ENCODE measurements at regions of chr9 and their contacts with region 1.

Region 1: DNA sequence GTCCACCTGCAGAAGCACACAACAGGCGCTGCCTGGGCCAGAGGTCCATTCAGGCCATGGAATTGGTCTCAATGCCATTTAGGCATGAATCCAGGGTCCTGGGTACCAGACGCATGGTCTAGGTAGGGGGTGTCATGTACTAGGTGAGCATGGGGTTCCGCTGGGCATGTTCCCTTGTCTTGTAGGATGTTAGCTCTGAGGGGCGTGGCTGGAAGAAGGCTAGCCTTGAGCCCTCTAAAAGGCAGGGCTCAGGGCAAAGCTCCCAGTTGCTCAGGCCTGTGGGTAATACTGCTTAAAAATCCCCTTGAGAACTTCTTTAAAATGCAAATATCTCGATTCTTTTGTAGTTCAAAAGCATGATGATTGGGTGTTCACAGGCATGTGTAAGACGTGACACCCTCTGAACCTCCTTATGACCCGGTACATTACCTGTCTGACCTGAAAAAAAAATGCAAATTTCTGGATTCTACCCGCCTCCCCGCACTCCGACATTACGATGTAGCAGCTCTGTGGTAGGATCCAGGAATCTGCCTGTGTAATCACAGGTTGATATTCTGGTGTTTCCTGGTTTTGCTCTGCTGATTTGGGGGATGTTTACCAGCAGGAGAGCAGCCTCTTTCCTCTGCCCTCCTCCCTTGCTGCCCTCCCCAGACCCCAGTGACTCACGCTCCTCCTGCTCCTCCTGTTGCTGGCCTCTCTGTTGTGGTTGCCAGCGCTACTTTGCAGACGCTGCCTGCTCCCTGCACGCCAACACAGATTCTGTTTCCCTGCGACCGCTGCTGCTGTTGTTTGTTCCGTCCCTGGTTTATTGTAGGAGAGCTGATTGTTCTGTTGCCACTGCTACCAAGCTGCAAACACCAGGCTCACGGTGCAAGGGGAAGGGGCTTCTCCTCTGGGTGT is 5.7 kb downstream of the TMC1 start:
- DNase-seq: peak; percentile 24 to 81 (median 63)
- ATAC-seq: peak; percentile 90
- H3K4me3 ChIP-seq: peak overlapping the region; percentile 28
- H3K4me3 Mint-ChIP-seq: peak overlapping the region; percentile 83 to 94 (median 88)
- H3K27ac ChIP-seq: peak overlapping the region; percentile 65
- H3K27ac Mint-ChIP-seq: peak overlapping the region; percentile 85 to 98 (median 92)
- H3K4me1 ChIP-seq: peaks cover 13 to 15% of the 10 kb centered on the region in 2 donors
- H3K4me1 Mint-ChIP-seq: peaks cover 11 to 56% (median 28%) of the 10 kb centered on the region in 7 donors
- H3K27me3 ChIP-seq: no peaks in the 10 kb centered on the region
- H3K27me3 Mint-ChIP-seq: no peaks in the 10 kb centered on the region

Region 2: DNA sequence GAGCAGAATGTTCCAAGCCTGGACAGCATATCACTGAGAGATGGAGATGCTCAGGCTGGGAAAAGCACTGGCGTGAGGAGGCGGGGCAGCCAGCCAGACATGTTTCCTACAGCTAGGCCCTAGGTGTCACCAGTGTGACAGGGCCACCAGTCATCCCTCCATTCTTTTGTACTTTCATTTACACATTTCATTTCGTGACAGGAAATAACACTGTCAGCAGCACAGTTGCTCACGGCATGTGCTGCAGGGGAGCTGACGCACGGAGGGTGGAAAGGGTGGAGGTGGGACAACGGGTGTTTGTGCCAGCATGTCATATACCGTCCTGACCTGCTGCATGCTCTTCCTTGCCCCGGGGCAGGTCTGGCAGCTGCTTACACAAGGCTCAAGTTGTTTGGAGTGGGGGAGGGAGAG is 744.0 kb before region 1 on chr9:
- CTCF ChIA-PET with region 1: no interaction called
- POLR2A ChIA-PET with region 1: no interaction called
- intact Hi-C with region 1: loop called (anchors 2 to 5 kb)
- DNase-seq: peak; percentile 60 to 93 (median 90)
- ATAC-seq: peak; percentile 98
- H3K4me3 ChIP-seq: peak overlapping the region; percentile 18
- H3K4me3 Mint-ChIP-seq: peak overlapping the region; percentile 62 to 82 (median 76)
- H3K27ac ChIP-seq: peak overlapping the region; percentile 85
- H3K27ac Mint-ChIP-seq: peak overlapping the region; percentile 94 to 100 (median 99)
- H3K4me1 ChIP-seq: peaks cover 38% of the 10 kb centered on the region in 2 donors
- H3K4me1 Mint-ChIP-seq: peaks cover 20 to 58% (median 53%) of the 10 kb centered on the region in 7 donors
- H3K27me3 ChIP-seq: no peaks in the 10 kb centered on the region
- H3K27me3 Mint-ChIP-seq: no peaks in the 10 kb centered on the region

Region 3: DNA sequence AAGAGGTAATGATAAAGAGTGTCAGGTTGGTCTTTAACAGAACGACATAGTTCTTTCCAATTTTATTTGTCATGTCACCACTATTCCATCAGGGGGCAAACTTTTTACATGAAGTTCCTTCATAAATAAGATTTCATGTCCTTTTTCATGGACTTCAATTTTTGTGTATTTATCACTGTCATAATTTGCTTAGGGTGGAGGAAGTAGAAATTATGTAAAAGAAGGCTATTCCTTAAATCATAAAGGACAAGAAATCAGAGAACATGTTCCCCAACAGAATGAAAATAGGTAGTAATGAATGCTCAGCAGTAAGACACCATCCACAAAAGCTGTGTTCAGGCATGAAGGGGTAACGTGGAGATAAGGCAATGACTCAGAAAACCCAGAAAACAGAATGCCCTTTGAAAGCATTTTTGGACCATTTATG is 234.9 kb before region 1 on chr9:
- CTCF ChIA-PET with region 1: no interaction called
- POLR2A ChIA-PET with region 1: interaction called, 3 read pairs
- intact Hi-C with region 1: loop called in 1 of 2 experiments (anchors 1 kb)
- DNase-seq: peak in 5 of 9 donors; percentile 12 to 35 (median 27)
- ATAC-seq: peak; percentile 60
- H3K4me3 ChIP-seq: no peak overlapping the region
- H3K4me3 Mint-ChIP-seq: no peak overlapping the region
- H3K27ac ChIP-seq: no peak overlapping the region
- H3K27ac Mint-ChIP-seq: no peak overlapping the region
- H3K4me1 ChIP-seq: no peaks in the 10 kb centered on the region
- H3K4me1 Mint-ChIP-seq: peaks cover 0 to 7% (median 0%) of the 10 kb centered on the region in 7 donors
- H3K27me3 ChIP-seq: no peaks in the 10 kb centered on the region
- H3K27me3 Mint-ChIP-seq: peaks cover 0 to 21% (median 6%) of the 10 kb centered on the region in 5 donors

Region 4: DNA sequence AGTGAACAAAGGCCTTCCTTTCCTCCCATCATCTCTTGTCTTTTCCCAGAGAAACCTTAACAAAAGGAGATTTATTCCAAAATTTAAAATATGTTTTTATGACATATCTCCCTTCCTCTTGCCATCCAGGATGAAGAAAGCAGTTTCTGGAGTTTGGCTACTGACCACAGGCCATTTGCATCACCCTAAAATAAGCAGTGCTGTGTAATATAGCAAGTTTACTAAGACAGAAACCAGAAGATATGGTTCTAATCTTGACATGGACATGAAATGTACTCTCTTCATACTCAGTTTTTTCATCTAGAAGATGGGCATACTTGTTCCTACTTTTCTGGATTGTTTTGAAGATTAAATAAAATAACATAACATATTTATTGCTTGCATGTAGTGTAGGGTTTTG is 112.0 kb before region 1 on chr9:
- CTCF ChIA-PET with region 1: no interaction called
- POLR2A ChIA-PET with region 1: no interaction called
- intact Hi-C with region 1: no loop called
- DNase-seq: no peak
- ATAC-seq: no peak
- H3K4me3 ChIP-seq: no peak overlapping the region
- H3K4me3 Mint-ChIP-seq: no peak overlapping the region
- H3K27ac ChIP-seq: no peak overlapping the region
- H3K27ac Mint-ChIP-seq: no peak overlapping the region
- H3K4me1 ChIP-seq: no peaks in the 10 kb centered on the region
- H3K4me1 Mint-ChIP-seq: peaks cover 0 to 2% (median 0%) of the 10 kb centered on the region in 7 donors
- H3K27me3 ChIP-seq: no peaks in the 10 kb centered on the region
- H3K27me3 Mint-ChIP-seq: no peaks in the 10 kb centered on the region

Region 5: GRCh38 chr9:72431036-72431435 is 96.1 kb before region 1 on chr9:
- CTCF ChIA-PET with region 1: no interaction called
- POLR2A ChIA-PET with region 1: no interaction called
- intact Hi-C with region 1: no loop called
- DNase-seq: no peak
- ATAC-seq: no peak
- H3K4me3 ChIP-seq: no peak overlapping the region
- H3K4me3 Mint-ChIP-seq: no peak overlapping the region
- H3K27ac ChIP-seq: no peak overlapping the region
- H3K27ac Mint-ChIP-seq: no peak overlapping the region
- H3K4me1 ChIP-seq: no peaks in the 10 kb centered on the region
- H3K4me1 Mint-ChIP-seq: no peaks in the 10 kb centered on the region
- H3K27me3 ChIP-seq: peaks cover 0 to 3% of the 10 kb centered on the region in 2 donors
- H3K27me3 Mint-ChIP-seq: peaks cover 0 to 15% (median 4%) of the 10 kb centered on the region in 5 donors

Region 6: DNA sequence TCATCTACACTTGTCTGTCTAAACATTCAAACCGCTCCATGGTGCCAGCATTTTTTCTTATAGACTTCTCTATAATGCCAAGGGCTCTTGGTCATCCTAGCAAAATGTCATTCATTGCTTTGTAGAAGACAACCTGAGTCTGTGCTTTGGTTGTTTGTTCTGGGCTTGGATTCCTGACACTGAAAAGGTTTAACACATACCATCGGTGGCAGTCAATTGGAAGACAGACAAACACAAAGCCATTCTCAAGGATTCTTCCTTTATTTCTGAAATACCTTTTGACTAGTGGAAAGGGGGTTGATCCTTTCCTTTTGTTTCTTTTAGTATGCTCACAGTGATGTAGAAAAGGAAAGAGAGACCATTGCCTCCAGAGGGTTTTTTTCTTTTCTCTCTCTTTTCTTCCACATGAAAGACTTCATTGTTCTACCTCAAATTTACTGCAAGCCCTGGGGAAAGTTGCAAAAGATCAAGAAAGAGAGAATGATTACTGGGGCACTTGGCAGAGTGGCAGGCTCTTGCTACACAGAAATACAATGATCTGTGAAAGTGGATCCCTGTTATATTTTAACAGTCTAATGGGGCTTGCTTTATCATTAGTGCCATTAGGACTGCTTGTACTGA is 72.2 kb before region 1 on chr9:
- CTCF ChIA-PET with region 1: no interaction called
- POLR2A ChIA-PET with region 1: no interaction called
- intact Hi-C with region 1: loop called in 1 of 2 experiments (anchors 5 kb)
- DNase-seq: no peak
- ATAC-seq: no peak
- H3K4me3 ChIP-seq: no peak overlapping the region
- H3K4me3 Mint-ChIP-seq: no peak overlapping the region
- H3K27ac ChIP-seq: no peak overlapping the region
- H3K27ac Mint-ChIP-seq: peak overlapping the region in 4 of 9 donors; percentile 2 to 32 (median 18)
- H3K4me1 ChIP-seq: peaks cover 0 to 7% of the 10 kb centered on the region in 2 donors
- H3K4me1 Mint-ChIP-seq: peaks cover 0 to 15% (median 4%) of the 10 kb centered on the region in 7 donors
- H3K27me3 ChIP-seq: no peaks in the 10 kb centered on the region
- H3K27me3 Mint-ChIP-seq: peaks cover 0 to 4% (median 0%) of the 10 kb centered on the region in 5 donors

Region 7: GRCh38 chr9:72509635-72510034 is 17.5 kb before region 1 on chr9:
- CTCF ChIA-PET with region 1: no interaction called
- POLR2A ChIA-PET with region 1: interaction called, 4 read pairs
- intact Hi-C with region 1: loop called in 1 of 2 experiments (anchors 2 kb)
- DNase-seq: no peak
- ATAC-seq: no peak
- H3K4me3 ChIP-seq: no peak overlapping the region
- H3K4me3 Mint-ChIP-seq: peak overlapping the region in 1 of 10 donors; percentile 6
- H3K27ac ChIP-seq: no peak overlapping the region
- H3K27ac Mint-ChIP-seq: peak overlapping the region in 3 of 9 donors; percentile 29 to 62 (median 54)
- H3K4me1 ChIP-seq: no peaks in the 10 kb centered on the region
- H3K4me1 Mint-ChIP-seq: peaks cover 0 to 12% (median 0%) of the 10 kb centered on the region in 7 donors
- H3K27me3 ChIP-seq: no peaks in the 10 kb centered on the region
- H3K27me3 Mint-ChIP-seq: no peaks in the 10 kb centered on the region

Region 8: DNA sequence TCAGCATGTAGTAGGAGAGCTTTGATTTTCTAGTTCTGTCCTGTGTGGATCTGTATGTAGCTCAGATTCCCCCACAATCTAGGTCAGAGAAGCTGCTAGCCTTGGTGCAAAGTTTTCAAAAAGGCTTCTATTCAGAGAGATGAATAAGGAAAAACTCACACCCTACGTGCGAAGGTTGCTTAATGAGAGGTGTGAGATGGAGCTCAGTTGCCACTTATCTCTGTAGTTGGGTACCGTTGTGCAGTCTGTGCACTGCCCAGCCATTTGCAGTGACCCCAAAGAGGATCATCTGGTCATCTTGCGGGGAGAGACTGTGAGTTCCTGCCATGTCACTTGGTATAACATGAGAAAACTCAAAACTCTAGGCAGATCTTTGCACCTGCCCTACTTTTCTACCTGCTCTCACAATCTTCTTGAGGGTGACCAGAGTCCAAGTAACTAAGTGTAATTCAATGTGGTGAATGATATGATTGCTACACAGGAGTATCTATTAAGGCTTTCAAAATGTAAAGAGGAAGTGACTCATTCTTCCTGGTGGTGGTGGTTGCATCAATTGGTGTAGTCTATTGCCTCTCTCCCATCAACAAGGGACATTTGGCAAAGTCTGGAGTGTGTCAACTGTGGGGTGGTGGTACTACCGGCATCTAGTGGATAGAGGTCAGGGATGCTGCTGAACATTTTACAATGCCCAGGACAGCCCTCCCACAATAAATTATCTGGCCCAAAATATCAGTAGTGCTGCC is 59.4 kb after region 1 on chr9:
- CTCF ChIA-PET with region 1: no interaction called
- POLR2A ChIA-PET with region 1: no interaction called
- intact Hi-C with region 1: loop called (anchors 1 to 5 kb)
- DNase-seq: peak in 1 of 9 donors; percentile 28
- ATAC-seq: peak; percentile 86
- H3K4me3 ChIP-seq: no peak overlapping the region
- H3K4me3 Mint-ChIP-seq: peak overlapping the region in 1 of 10 donors; percentile 61
- H3K27ac ChIP-seq: no peak overlapping the region
- H3K27ac Mint-ChIP-seq: peak overlapping the region in 2 of 9 donors; percentile 23 to 56
- H3K4me1 ChIP-seq: no peaks in the 10 kb centered on the region
- H3K4me1 Mint-ChIP-seq: peaks cover 6 to 51% (median 11%) of the 10 kb centered on the region in 7 donors
- H3K27me3 ChIP-seq: no peaks in the 10 kb centered on the region
- H3K27me3 Mint-ChIP-seq: no peaks in the 10 kb centered on the region

Region 9: DNA sequence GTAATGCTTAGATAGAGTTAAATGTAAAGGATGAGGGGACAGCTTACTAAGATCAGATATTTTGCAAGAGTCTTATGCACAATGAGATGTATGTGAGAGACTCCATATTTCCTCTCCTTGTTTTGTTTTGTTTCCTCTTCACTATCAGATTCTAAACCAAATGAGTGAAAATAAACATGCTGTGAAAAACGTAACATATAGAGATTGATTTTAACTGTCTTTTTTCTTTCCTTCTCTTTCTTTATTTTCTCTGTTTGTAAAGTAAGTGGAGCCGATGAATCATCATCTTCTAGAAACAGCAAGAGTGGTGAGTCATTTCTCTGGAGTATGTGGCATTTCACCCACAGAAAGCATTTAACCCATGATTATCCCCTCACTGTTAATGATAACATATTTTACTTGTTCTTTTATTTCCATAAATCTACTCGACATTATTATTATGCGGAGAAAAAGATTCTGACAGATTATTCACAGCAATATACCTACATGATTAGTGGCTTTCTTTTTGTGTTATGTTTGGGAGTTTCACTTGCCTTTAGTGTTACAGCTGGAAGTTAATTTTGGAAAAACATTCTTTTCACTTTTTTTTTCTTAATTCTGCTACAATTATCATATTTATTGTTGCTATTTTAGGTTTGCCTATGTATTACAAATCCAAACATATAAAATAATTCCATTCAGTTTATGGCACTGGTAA is 622.4 kb after region 1 on chr9:
- CTCF ChIA-PET with region 1: no interaction called
- POLR2A ChIA-PET with region 1: no interaction called
- intact Hi-C with region 1: loop called (anchors 1 to 10 kb)
- DNase-seq: peak in 1 of 9 donors; percentile 57
- ATAC-seq: peak; percentile 49
- H3K4me3 ChIP-seq: peak overlapping the region; percentile 17
- H3K4me3 Mint-ChIP-seq: peak overlapping the region in 9 of 10 donors; percentile 8 to 79 (median 60)
- H3K27ac ChIP-seq: peak overlapping the region; percentile 32
- H3K27ac Mint-ChIP-seq: peak overlapping the region; percentile 71 to 96 (median 78)
- H3K4me1 ChIP-seq: peaks cover 28 to 32% of the 10 kb centered on the region in 2 donors
- H3K4me1 Mint-ChIP-seq: peaks cover 34 to 80% (median 54%) of the 10 kb centered on the region in 7 donors
- H3K27me3 ChIP-seq: no peaks in the 10 kb centered on the region
- H3K27me3 Mint-ChIP-seq: peaks cover 0 to 2% (median 0%) of the 10 kb centered on the region in 5 donors